Activated CD4-positive, alpha-beta T cell treated with anti-CD3 and anti-CD28 coated beads for 36 hours (primary cell): ENCODE measurements at regions of chr13 and their contacts with region 1.

Region 1: DNA sequence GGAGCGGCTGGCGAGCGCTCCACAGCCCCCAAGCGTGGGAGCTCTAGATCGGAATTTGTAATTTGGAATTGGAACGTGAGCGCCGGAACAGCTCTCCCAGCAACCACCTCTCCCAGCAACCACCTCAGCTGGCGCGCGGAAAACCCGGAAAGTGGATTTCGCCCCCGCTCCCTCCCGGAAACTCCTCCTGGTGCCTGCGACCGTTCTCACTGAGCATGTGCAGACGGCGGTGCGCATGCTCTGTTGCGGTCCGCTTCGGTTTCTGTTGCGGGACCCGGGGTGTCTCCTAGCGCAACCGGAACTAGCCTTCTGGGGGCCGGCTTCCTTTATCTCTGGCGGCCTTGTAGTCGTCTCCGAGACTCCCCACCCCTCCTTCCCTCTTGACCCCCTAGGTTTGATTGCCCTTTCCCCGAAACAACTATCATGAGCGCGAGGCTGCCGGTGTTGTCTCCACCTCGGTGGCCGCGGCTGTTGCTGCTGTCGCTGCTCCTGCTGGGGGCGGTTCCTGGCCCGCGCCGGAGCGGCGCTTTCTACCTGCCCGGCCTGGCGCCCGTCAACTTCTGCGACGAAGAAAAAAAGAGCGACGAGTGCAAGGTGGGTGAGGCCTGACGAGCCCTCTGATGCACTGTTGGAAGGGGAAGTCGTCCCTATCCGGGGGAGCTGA is at the start of gene TM9SF2:
- DNase-seq: peak; percentile 97
- ATAC-seq: peak; percentile 69
- H3K4me3 Mint-ChIP-seq: peak within 1 kb of the TSS; percentile 96
- H3K27ac Mint-ChIP-seq: peak within 1 kb of the TSS; percentile 97
- H3K4me1 Mint-ChIP-seq: peaks cover 68% of the 10 kb centered on the region
- H3K27me3 Mint-ChIP-seq: no peaks in the 10 kb centered on the region
- total RNA-seq, gene TM9SF2: 51.8 to 53.4 TPM

Region 2: DNA sequence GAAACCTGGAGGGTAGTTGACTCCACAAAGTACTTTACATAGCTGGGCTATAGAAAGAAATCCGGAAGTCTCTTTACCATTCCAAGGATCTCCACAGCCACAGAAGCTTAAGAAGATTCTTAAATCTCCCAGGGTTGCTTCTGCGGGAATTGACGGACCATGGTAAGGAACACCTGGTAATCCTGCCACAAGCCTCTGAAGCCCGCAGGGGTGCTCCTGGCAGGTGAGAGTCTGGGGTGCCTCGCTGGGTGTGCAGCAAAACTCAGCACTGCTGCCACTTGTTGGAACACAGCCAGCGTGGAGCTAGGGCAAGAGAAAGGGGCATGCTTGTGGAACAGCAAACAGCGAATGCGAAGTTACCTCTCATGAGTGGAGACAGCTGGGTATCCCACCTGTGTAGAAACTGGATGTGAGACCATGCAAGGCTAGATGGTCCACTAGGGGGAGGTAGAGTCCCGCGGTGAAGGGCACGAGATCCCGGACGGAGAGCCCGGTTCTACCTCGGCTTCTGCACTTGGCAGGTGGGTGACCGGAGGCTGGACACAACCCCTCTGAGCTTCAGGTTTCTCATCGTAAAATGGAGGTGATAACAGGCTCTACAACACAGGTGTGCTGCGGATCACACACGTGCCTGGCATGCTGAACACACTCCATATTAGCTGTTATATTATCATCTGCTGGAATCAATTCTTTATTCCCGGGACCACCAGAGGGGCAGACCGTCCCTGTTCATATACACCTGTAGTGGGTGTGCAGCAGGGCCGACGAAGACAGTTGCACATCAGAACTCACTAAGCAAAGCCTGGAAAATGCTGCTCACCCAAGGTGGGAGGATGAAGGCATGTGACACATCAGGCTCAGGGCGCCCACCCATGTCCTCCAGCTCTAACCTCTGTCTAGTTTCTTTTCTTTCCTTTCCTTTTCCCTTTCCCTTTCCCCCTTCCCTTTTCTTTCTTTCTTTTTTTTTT is 324.7 kb before region 1 on chr13:
- CTCF ChIA-PET with region 1: no interaction called
- POLR2A ChIA-PET with region 1: no interaction called
- intact Hi-C with region 1: loop called (anchors 5 to 10 kb)
- DNase-seq: peak; percentile 86
- ATAC-seq: peak; percentile 91
- H3K4me3 Mint-ChIP-seq: peak overlapping the region; percentile 51
- H3K27ac Mint-ChIP-seq: no peak overlapping the region
- H3K4me1 Mint-ChIP-seq: peaks cover 41% of the 10 kb centered on the region
- H3K27me3 Mint-ChIP-seq: no peaks in the 10 kb centered on the region

Region 3: DNA sequence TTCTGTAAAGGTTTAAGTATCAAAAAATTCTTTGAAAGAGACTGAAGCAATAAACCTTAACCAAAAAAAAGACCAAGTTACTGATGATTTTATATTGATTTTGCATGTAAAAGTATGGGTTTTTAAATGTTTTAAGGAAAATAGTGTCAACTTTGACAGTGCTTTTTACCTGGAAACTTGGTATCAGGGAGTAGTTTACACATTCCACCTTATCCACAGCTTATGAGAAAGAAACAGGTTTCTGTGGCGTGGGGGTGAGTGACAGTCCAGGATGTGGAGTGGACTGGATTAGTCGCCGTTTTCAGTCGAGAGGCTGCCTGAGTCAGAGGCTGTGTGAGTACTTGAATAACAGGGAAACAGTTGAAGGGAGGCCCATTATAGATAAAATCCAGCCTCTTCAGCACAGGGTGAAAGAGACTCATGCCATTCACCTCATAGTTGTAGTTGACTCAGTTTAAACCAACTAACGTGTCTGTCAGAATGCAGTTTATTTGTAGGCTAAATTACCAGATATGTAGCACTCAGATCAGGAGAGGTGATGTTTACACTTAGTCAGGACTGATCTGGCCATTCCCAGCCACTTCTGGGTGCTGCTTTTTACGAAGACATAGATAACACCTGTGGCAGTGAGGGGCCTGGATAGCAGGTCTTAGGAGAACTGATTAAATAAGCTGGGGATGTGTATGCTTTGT is 193.5 kb before region 1 on chr13:
- CTCF ChIA-PET with region 1: no interaction called
- POLR2A ChIA-PET with region 1: no interaction called
- intact Hi-C with region 1: loop called in 1 of 2 experiments (anchors 5 kb)
- DNase-seq: peak; percentile 88
- ATAC-seq: peak; percentile 82
- H3K4me3 Mint-ChIP-seq: peak overlapping the region; percentile 85
- H3K27ac Mint-ChIP-seq: peak overlapping the region; percentile 98
- H3K4me1 Mint-ChIP-seq: peaks cover 73% of the 10 kb centered on the region
- H3K27me3 Mint-ChIP-seq: no peaks in the 10 kb centered on the region

Region 4: DNA sequence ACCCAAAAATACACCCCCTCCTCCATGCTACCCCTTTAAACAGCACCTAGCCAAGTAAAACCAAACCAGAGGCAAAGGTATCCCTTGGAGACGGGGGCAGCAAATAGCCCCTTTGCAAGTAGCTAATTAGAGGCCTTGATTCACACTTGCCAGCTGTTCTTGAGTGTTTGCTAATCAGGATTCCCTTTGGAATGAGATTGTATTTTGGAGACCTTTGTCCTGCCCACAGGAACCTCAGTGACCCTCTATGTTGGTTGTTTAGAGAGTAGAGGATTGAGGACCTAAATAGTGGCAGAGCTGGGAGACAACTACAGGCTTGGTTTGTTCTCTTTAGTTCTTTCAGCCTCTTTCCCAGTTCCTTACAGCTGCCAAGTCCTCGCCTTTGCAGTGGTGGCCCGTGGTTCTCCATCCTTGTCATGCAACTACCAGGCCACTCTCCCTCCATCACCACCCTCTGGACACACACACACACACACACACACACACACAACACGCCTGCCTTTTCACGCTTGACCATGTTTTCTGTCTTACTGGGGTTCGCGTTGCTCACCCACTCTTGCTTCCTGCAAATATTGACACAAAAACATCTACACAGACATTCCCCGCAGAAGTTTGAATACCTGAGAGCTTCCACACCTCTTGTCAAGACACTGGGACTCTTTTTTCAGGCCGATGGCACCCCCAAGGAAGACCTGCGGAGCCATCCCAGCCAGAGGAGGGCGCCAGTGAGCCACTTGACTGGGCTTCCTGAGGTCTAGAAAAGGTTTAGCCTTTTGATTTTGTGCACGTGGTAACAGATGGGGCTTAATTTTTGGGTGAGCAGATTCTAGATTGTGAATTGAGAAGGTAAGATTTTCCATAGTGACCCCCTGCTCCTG is 114.2 kb before region 1 on chr13:
- CTCF ChIA-PET with region 1: interaction called, 5 read pairs
- POLR2A ChIA-PET with region 1: no interaction called
- intact Hi-C with region 1: loop called (anchors 2 to 5 kb)
- DNase-seq: peak; percentile 94
- ATAC-seq: peak; percentile 62
- H3K4me3 Mint-ChIP-seq: no peak overlapping the region
- H3K27ac Mint-ChIP-seq: peak overlapping the region; percentile 76
- H3K4me1 Mint-ChIP-seq: peaks cover 63% of the 10 kb centered on the region
- H3K27me3 Mint-ChIP-seq: no peaks in the 10 kb centered on the region

Region 5: GRCh38 chr13:99516153-99516929 is 15.0 kb after region 1 on chr13:
- CTCF ChIA-PET with region 1: interaction called, 62 read pairs
- POLR2A ChIA-PET with region 1: interaction called, 8 read pairs
- intact Hi-C with region 1: no loop called
- DNase-seq: no peak
- ATAC-seq: no peak
- H3K4me3 Mint-ChIP-seq: no peak overlapping the region
- H3K27ac Mint-ChIP-seq: no peak overlapping the region
- H3K4me1 Mint-ChIP-seq: peaks cover 38% of the 10 kb centered on the region
- H3K27me3 Mint-ChIP-seq: no peaks in the 10 kb centered on the region

Region 6: GRCh38 chr13:100088644-100089464 is 587.5 kb after region 1 on chr13 and contains the start of gene PCCA:
- CTCF ChIA-PET with region 1: no interaction called
- POLR2A ChIA-PET with region 1: no interaction called
- intact Hi-C with region 1: loop called in 1 of 2 experiments (anchors 5 kb)
- DNase-seq: peak; percentile 86
- ATAC-seq: peak; percentile 87
- H3K4me3 Mint-ChIP-seq: peak within 1 kb of the TSS; percentile 78
- H3K27ac Mint-ChIP-seq: peak within 1 kb of the TSS; percentile 84
- H3K4me1 Mint-ChIP-seq: peaks cover 14% of the 10 kb centered on the region
- H3K27me3 Mint-ChIP-seq: no peaks in the 10 kb centered on the region
- total RNA-seq, gene PCCA: 5.8 to 7.3 TPM